HepG2 (cell line): ENCODE measurements at regions of chr16 and their contacts with region 1.

Region 1: GRCh38 chr16:58548378-58548777 is 33.1 kb downstream of the SETD6 start:
- DNase-seq: no peak
- ATAC-seq: no peak
- H3K4me3 ChIP-seq: no peak overlapping the region
- H3K27ac ChIP-seq: no peak overlapping the region
- H3K4me1 ChIP-seq: no peaks in the 10 kb centered on the region
- H3K27me3 ChIP-seq: no peaks in the 10 kb centered on the region
- CTCF ChIP-seq: no peak
- EP300 ChIP-seq: no peak
- POLR2A ChIP-seq: no peak
- RAD21 ChIP-seq: no peak

Region 2: DNA sequence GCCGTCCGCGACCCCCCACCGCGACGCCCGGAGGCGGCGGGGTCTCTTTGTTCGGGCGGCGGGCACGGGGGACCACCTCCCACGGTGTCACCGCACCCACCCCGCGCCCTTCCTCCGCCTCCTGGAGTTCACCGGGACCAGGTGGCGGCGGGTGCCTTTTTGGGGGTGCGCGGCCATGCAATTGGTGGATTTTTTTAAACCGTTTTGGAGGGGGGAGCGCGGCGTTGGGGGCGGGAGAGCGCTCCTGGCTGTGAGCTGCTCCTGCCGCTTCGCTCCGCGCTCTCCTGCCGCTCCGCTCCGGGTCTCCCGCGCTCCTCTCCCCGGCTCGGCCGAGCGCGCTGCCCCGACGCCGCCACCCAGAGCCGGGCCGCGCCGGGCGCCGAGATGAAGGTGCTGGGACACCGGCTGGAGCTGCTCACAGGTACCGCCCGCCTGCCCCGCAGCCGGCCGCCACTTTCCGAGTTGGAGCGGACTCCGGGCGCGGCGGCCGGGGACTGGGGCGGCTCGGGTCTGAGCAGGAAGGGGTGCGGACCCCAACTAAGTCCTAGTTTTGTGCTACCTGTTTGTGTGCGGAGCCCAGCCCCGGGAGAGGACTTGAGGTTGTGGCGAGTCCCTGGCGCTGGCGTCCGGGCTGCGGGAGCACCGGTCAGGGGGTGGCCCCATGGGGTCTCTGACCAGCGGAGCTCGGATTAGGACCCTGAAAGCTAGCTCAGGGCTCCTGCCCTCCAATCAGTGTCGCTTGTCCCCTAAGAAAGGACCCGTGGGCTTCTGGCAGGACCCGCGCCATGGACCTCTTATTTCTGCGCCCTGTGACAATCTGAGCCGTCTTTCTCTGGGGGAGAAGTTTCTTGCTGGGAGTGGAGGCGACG is 84.1 kb before region 1 on chr16:
- CTCF ChIA-PET with region 1: no interaction called
- POLR2A ChIA-PET with region 1: no interaction called
- in situ Hi-C with region 1: no loop called
- intact Hi-C with region 1: no loop called
- DNase-seq: no peak
- ATAC-seq: peak; percentile 85
- H3K4me3 ChIP-seq: peak overlapping the region; percentile 33 to 64 (median 44); a peak in 5 of 6 replicates
- H3K27ac ChIP-seq: no peak overlapping the region
- H3K4me1 ChIP-seq: peaks cover 21% of the 10 kb centered on the region
- H3K27me3 ChIP-seq: peaks cover 11 to 67% of the 10 kb centered on the region in 2 experiments
- CTCF ChIP-seq: no peak
- EP300 ChIP-seq: no peak
- POLR2A ChIP-seq: no peak
- RAD21 ChIP-seq: no peak

Region 3: DNA sequence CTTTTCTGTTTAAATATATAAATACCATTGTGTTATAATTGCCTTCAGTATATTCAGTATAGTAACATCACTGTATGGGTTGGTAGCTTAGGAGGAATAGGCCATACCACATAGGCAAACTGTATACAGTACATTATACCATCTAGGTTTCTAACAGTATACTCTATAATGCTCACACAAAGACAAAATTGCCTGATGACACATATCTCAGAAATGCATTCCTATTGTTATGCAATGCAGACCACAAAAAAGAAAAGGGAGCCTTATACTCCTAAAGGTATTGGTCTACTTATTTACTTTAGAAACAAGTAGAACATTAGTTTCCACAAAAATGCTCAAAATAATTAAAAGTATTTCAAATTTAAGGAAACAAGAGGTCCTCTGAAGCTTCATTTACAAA is 14.9 kb after region 1 on chr16:
- CTCF ChIA-PET with region 1: no interaction called
- POLR2A ChIA-PET with region 1: no interaction called
- in situ Hi-C with region 1: no loop called
- intact Hi-C with region 1: no loop called
- DNase-seq: no peak
- ATAC-seq: no peak
- H3K4me3 ChIP-seq: no peak overlapping the region
- H3K27ac ChIP-seq: no peak overlapping the region
- H3K4me1 ChIP-seq: no peaks in the 10 kb centered on the region
- H3K27me3 ChIP-seq: no peaks in the 10 kb centered on the region
- CTCF ChIP-seq: no peak
- EP300 ChIP-seq: no peak
- POLR2A ChIP-seq: no peak
- RAD21 ChIP-seq: no peak

Region 4: GRCh38 chr16:58582971-58583765 is 34.8 kb after region 1 on chr16:
- CTCF ChIA-PET with region 1: no interaction called
- POLR2A ChIA-PET with region 1: no interaction called
- in situ Hi-C with region 1: no loop called
- intact Hi-C with region 1: loop called (anchors 5 kb)
- DNase-seq: no peak
- ATAC-seq: no peak; the same call in 2 of the 3 replicates
- H3K4me3 ChIP-seq: no peak overlapping the region
- H3K27ac ChIP-seq: no peak overlapping the region
- H3K4me1 ChIP-seq: peaks cover 18% of the 10 kb centered on the region
- H3K27me3 ChIP-seq: no peaks in the 10 kb centered on the region
- CTCF ChIP-seq: no peak
- EP300 ChIP-seq: no peak
- POLR2A ChIP-seq: no peak
- RAD21 ChIP-seq: no peak

Region 5: GRCh38 chr16:58652461-58653140 is 104.2 kb after region 1 on chr16:
- CTCF ChIA-PET with region 1: no interaction called
- POLR2A ChIA-PET with region 1: no interaction called
- in situ Hi-C with region 1: no loop called
- intact Hi-C with region 1: no loop called
- DNase-seq: peak; percentile 57
- ATAC-seq: peak; percentile 56
- H3K4me3 ChIP-seq: no peak overlapping the region
- H3K27ac ChIP-seq: no peak overlapping the region
- H3K4me1 ChIP-seq: peaks cover 72% of the 10 kb centered on the region
- H3K27me3 ChIP-seq: no peaks in the 10 kb centered on the region
- CTCF ChIP-seq: no peak
- EP300 ChIP-seq: no peak
- POLR2A ChIP-seq: no peak
- RAD21 ChIP-seq: no peak

Region 6: DNA sequence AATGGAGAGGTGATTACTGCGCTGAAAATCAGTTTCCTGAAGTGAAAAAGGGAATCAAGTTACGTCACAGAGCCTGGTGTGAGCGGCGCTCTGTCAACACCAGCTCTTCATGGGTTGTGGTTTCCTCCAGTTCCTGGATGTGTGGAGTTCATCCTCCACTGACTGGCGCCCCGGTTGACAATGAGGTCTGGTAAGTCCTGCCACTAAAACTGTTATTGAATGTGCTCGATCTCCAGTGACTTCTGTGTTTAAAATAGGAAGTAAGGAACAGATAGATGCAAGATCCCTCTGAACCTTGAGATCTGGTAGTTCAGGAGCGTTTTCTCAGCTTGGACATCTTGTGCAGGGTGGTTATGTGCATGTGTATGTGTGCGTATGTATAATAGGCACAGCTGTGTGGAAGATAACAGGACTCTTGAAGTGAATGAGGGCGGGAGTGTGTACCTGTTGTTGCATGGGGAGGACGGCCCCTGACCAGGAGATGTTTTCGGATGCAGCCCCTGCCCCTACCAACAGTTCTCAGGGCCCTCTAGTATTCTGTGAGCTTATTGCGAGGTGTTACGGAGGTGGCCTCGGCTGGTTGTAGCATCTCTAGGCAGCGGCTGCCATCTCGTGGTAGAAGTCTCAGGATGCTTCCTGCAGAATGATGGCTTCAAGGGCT is 207.7 kb after region 1 on chr16:
- CTCF ChIA-PET with region 1: no interaction called
- POLR2A ChIA-PET with region 1: no interaction called
- in situ Hi-C with region 1: no loop called
- intact Hi-C with region 1: no loop called
- DNase-seq: peak; percentile 81
- ATAC-seq: peak; percentile 98
- H3K4me3 ChIP-seq: no peak overlapping the region; a peak in 1 of 6 replicates
- H3K27ac ChIP-seq: no peak overlapping the region
- H3K4me1 ChIP-seq: peaks cover 6% of the 10 kb centered on the region
- H3K27me3 ChIP-seq: peaks cover 6 to 19% of the 10 kb centered on the region in 2 experiments; a peak in 3 of 5 replicates
- CTCF ChIP-seq: peak; percentile 97
- EP300 ChIP-seq: no peak
- POLR2A ChIP-seq: no peak
- RAD21 ChIP-seq: peak; percentile 94